A673 (cell line): ENCODE measurements at regions of chr2 and their contacts with region 1.

Region 1: GRCh38 chr2:201158111-201158929 is 24.6 kb upstream of the CASP10 start:
- DNase-seq: peak; percentile 88
- H3K4me3 ChIP-seq: no peak overlapping the region
- H3K27ac ChIP-seq: peak overlapping the region; percentile 41
- H3K4me1 ChIP-seq: peaks cover 8% of the 10 kb centered on the region
- H3K27me3 ChIP-seq: no peaks in the 10 kb centered on the region
- CTCF ChIP-seq: peak; percentile 80

Region 2: GRCh38 chr2:200901459-200902072 is 256.8 kb before region 1 on chr2:
- CTCF ChIA-PET with region 1: interaction called, 7 read pairs
- POLR2A ChIA-PET with region 1: interaction called, 3 read pairs
- intact Hi-C with region 1: loop called (anchors 5 kb)
- DNase-seq: peak; percentile 92
- H3K4me3 ChIP-seq: no peak overlapping the region
- H3K27ac ChIP-seq: no peak overlapping the region
- H3K4me1 ChIP-seq: no peaks in the 10 kb centered on the region
- H3K27me3 ChIP-seq: no peaks in the 10 kb centered on the region
- CTCF ChIP-seq: peak; percentile 72

Region 3: DNA sequence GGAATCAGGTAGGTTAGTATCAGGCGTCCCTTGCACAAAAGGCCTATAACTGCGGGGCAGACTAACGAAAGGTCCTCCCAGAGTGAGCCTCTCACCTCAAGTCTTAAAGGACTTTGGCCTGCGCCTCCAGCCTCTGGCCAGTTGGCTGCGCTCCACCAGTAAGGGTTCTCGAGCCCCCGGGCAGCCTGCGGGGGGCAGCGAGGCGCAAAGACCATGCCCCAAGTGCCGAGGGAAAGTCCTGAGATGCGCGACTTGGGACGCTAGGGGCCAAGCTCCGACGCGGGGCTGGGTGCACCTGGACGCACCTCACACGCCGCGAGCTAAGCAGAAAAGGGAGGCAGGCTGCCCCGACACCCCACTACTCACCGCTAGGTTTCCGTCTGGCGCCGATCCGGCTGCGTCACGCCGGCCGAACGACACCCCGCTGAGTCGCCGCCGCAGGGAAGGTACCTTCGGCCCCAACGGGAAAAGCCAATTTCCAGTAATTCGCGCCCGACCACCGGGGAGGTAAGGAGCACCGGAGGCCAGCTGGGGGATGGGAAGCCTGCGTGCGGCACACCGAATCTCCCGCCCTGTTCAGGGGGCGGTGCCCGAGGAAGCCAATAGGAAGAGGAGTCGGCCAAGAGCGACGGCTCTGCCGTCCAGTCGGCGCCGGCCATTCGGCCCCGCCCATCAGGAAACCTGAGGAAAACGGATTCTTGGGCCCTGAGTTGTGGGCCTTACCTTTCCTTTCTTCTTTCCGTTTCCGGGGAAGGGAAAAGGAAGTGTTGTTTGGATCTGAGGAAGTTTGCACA is 195.0 kb before region 1 on chr2 and contains the start of gene ORC2:
- CTCF ChIA-PET with region 1: no interaction called
- POLR2A ChIA-PET with region 1: no interaction called
- intact Hi-C with region 1: loop called (anchors 5 kb)
- DNase-seq: peak; percentile 96
- H3K4me3 ChIP-seq: peak within 1 kb of the TSS; percentile 76
- H3K27ac ChIP-seq: peak within 1 kb of the TSS; percentile 75
- H3K4me1 ChIP-seq: peaks cover 28% of the 10 kb centered on the region
- H3K27me3 ChIP-seq: no peaks in the 10 kb centered on the region
- CTCF ChIP-seq: peak; percentile 61
- total RNA-seq, gene ORC2: 48.6 and 56.0 TPM in 2 replicates

Region 4: DNA sequence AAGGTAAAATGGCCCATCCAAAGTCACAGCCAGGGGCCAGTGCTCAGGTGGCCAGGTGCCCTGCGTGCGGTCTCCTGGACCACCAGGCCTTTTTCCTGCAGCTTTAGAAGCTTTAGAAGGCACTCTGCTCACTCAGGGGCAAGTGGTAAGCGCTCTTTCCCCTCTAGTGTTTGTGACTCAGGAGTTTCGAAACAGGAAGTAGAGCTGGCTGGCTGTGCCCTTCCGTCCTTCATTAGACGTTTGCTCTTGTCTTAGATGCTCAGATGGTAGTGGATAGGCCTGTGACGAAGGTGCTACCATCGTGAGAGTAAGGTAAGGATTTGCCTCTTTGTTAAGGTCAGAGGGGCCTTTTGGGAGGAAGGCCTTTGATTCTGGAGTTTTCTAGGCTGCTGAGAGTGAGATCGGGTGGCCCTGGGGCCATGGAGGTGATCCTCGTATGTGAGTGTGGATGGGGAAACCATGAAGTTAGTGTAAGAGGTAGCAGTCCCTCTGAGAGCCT is 102.0 kb after region 1 on chr2 and contains the start of gene CASP8:
- CTCF ChIA-PET with region 1: no interaction called
- POLR2A ChIA-PET with region 1: no interaction called
- intact Hi-C with region 1: no loop called
- DNase-seq: peak; percentile 57
- H3K4me3 ChIP-seq: no peak within 1 kb of the TSS
- H3K27ac ChIP-seq: peak within 1 kb of the TSS; percentile 9
- H3K4me1 ChIP-seq: peaks cover 46% of the 10 kb centered on the region
- H3K27me3 ChIP-seq: no peaks in the 10 kb centered on the region
- CTCF ChIP-seq: no peak
- total RNA-seq, gene CASP8: 17.9 and 28.4 TPM in 2 replicates

Region 5: DNA sequence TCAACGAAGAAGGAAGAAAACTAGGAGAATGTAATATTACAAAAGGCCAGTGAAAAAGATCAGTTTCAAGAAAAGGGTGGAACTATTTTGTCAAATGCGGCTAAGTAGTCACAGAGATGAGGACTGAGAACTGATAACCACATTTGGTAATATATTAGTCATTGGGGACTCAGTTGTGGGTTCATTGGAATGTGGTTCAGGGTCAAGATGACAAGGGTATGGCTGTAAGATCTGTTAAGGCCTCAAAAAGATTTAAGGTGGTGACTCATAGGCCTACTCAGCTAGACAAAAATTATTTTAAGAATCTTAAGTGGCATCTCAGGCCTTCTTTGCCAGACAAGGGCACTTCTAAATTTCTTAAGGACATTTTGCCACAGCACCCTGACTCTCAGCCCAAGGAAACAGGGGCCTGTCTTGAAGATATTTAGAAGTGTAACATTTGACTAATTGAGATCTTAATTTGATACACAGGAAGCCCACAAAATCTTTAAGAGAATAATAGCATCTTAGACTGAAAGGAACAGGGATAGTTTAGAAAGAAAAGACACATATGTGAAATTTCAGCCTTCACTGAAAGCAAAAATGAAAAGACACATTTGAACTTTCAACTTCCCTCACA is 374.5 kb after region 1 on chr2:
- CTCF ChIA-PET with region 1: no interaction called
- POLR2A ChIA-PET with region 1: no interaction called
- intact Hi-C with region 1: no loop called
- DNase-seq: peak; percentile 6
- H3K4me3 ChIP-seq: no peak overlapping the region
- H3K27ac ChIP-seq: no peak overlapping the region
- H3K4me1 ChIP-seq: no peaks in the 10 kb centered on the region
- H3K27me3 ChIP-seq: no peaks in the 10 kb centered on the region
- CTCF ChIP-seq: no peak

Region 6: DNA sequence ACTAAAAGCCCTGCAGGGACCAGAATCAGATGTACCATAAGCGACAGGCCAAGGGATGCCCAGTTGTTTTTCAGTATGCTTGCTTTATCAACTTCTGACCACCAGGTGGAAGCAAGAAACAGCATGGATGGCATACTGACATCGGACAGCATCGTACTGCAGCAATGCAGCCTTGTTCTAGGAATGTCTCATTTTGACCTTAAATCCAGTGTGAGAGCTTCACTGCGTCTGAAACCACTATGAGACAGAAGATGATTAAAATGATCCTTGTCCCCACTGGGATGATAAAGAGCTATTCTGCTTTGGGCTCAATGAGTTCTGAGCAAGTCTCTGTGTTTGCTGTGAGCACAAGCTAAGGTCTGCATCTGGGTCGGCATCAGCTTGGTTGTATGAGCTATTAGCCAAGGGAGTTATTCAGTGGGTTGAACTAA is 702.3 kb after region 1 on chr2:
- CTCF ChIA-PET with region 1: no interaction called
- POLR2A ChIA-PET with region 1: no interaction called
- intact Hi-C with region 1: no loop called
- DNase-seq: peak; percentile 89
- H3K4me3 ChIP-seq: no peak overlapping the region
- H3K27ac ChIP-seq: no peak overlapping the region
- H3K4me1 ChIP-seq: peaks cover 35% of the 10 kb centered on the region
- H3K27me3 ChIP-seq: no peaks in the 10 kb centered on the region
- CTCF ChIP-seq: peak; percentile 85